ENCODE measurements at regions of chr5 and their contacts with region 1.

Region 1: GRCh38 chr5:122697191-122697590 is 77.7 kb upstream of the SNX2 start:
- DNase-seq: no peak
- ATAC-seq: no peak
- H3K4me3 ChIP-seq: no peak overlapping the region
- H3K27ac ChIP-seq: no peak overlapping the region
- H3K4me1 ChIP-seq: peaks cover 14% of the 10 kb centered on the region
- H3K27me3 ChIP-seq: no peaks in the 10 kb centered on the region
- CTCF ChIP-seq: no peak
- EP300 ChIP-seq: no peak
- POLR2A ChIP-seq: no peak
- RAD21 ChIP-seq: no peak

Region 2: DNA sequence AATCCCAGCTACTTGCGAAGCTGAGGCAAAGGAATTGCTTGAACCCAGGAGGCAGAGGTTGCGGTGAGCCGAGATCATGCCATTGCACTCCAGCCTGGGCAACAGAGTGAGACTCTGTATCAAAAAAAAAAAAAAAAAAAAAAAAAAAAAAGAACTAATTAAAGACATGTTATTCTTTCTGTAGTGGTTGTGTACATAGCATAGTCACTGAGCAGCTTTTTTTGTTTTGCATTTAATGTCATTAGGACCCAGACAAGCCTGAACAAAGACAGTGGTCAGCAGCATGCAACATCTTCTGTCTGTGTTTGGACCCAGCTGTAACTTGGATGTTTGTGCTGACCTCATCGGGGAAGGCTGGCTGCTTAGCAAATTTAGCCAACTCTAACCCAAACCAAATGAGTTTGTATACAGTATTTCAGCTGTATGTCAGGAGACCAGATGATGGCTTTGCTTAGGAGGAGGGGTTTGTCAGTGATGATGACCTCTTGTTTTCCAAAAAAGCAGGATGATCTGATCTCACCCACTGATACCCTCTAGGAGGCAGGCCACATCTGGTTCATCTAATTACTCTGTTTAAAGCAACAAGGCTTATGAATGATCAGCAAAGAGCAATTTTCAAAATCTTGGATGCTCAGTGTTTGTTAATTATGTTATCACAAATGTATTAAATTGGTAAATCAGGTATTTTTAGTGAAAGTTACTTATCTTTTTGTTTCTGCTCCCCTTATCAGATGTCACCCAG is 345.6 kb before region 1 on chr5:
- CTCF ChIA-PET with region 1: no interaction called
- POLR2A ChIA-PET with region 1: no interaction called
- RAD21 ChIA-PET with region 1: no interaction called
- SMC1A ChIA-PET with region 1: no interaction called
- in situ Hi-C with region 1: no loop called
- intact Hi-C with region 1: no loop called
- DNase-seq: no peak
- ATAC-seq: no peak
- H3K4me3 ChIP-seq: no peak overlapping the region
- H3K27ac ChIP-seq: no peak overlapping the region
- H3K4me1 ChIP-seq: no peaks in the 10 kb centered on the region
- H3K27me3 ChIP-seq: no peaks in the 10 kb centered on the region
- CTCF ChIP-seq: no peak
- EP300 ChIP-seq: no peak
- POLR2A ChIP-seq: no peak
- RAD21 ChIP-seq: no peak

Region 3: GRCh38 chr5:122730037-122730436 is 32.8 kb after region 1 on chr5:
- CTCF ChIA-PET with region 1: interaction called, 4 read pairs
- POLR2A ChIA-PET with region 1: interaction called, 16 read pairs
- RAD21 ChIA-PET with region 1: interaction called, 3 read pairs
- SMC1A ChIA-PET with region 1: interaction called, 8 read pairs
- in situ Hi-C with region 1: no loop called
- intact Hi-C with region 1: no loop called
- DNase-seq: no peak
- ATAC-seq: peak; percentile 44
- H3K4me3 ChIP-seq: no peak overlapping the region
- H3K27ac ChIP-seq: no peak overlapping the region
- H3K4me1 ChIP-seq: peaks cover 14% of the 10 kb centered on the region
- H3K27me3 ChIP-seq: no peaks in the 10 kb centered on the region
- CTCF ChIP-seq: no peak
- EP300 ChIP-seq: 0 out of 4 replicates have a peak, but pooled peaks of 1 of the 2 experiments have one; percentile 9
- POLR2A ChIP-seq: no peak
- RAD21 ChIP-seq: no peak